ENCODE measurements at regions of chr14 and their contacts with region 1.

Region 1: GRCh38 chr14:102503641-102504327 is 5.8 kb downstream of the ANKRD9 start:
- DNase-seq: no peak
- H3K4me3 ChIP-seq: no peak overlapping the region
- H3K27ac ChIP-seq: peak overlapping the region in 27 of 59 donors; percentile 4 to 73 (median 50)
- H3K27me3 ChIP-seq: no peaks in the 10 kb centered on the region
- CTCF ChIP-seq: no peak

Region 2: GRCh38 chr14:102472791-102473150 is 31.0 kb before region 1 on chr14:
- intact Hi-C with region 1: loop called in 1 of 2 experiments (anchors 2 kb)
- DNase-seq: peak in 1 of 10 donors; percentile 65
- H3K4me3 ChIP-seq: no peak overlapping the region
- H3K27ac ChIP-seq: peak overlapping the region in 55 of 59 donors; percentile 15 to 92 (median 79)
- H3K27me3 ChIP-seq: no peaks in the 10 kb centered on the region
- CTCF ChIP-seq: no peak

Measured in dorsolateral prefrontal cortex (tissue), 120 donors.